CD8-positive, alpha-beta T cell (primary cell): ENCODE measurements at regions of chr20 and their contacts with region 1.

Region 1: GRCh38 chr20:46363800-46364634 is 42.4 kb downstream of the ELMO2 start:
- DNase-seq: peak; percentile 70 to 94 (median 86)
- ATAC-seq: peak; percentile 67
- H3K4me3 ChIP-seq: peak overlapping the region; percentile 89 to 92
- H3K4me3 Mint-ChIP-seq: peak overlapping the region; percentile 90
- H3K27ac ChIP-seq: peak overlapping the region; percentile 97 to 98
- H3K27ac Mint-ChIP-seq: peak overlapping the region; percentile 97
- H3K4me1 ChIP-seq: peaks cover 70% of the 10 kb centered on the region
- H3K4me1 Mint-ChIP-seq: peaks cover 83% of the 10 kb centered on the region
- H3K27me3 ChIP-seq: no peaks in the 10 kb centered on the region
- H3K27me3 Mint-ChIP-seq: no peaks in the 10 kb centered on the region
- CTCF ChIP-seq: no peak

Region 2: DNA sequence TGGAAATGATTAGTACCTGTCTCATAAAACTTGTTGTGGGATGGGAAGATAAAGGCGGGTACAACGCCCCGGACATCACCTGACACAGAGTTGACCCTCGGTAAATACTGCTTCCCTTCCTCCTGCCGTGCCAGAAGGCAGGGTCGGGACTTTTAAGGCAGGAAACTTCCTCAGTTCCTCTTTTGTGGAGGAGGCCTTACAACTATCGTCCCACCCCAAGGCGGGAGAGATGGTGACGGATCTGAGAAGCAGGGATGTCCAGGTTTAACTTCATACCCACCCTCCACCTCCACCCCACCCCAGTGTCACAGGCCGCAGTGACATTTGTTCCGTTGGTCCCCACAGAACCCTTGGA is 571.7 kb before region 1 on chr20:
- CTCF ChIA-PET with region 1: no interaction called
- POLR2A ChIA-PET with region 1: no interaction called
- intact Hi-C with region 1: loop called in 1 of 2 experiments (anchors 5 kb)
- DNase-seq: peak in 3 of 9 experiments; percentile 8 to 20 (median 12)
- ATAC-seq: peak; percentile 10
- H3K4me3 ChIP-seq: peak overlapping the region; percentile 82 to 100
- H3K4me3 Mint-ChIP-seq: peak overlapping the region; percentile 93
- H3K27ac ChIP-seq: peak overlapping the region; percentile 87 to 96
- H3K27ac Mint-ChIP-seq: peak overlapping the region; percentile 93
- H3K4me1 ChIP-seq: peaks cover 16% of the 10 kb centered on the region
- H3K4me1 Mint-ChIP-seq: peaks cover 19% of the 10 kb centered on the region
- H3K27me3 ChIP-seq: no peaks in the 10 kb centered on the region
- H3K27me3 Mint-ChIP-seq: no peaks in the 10 kb centered on the region
- CTCF ChIP-seq: no peak

Region 3: GRCh38 chr20:46374383-46374782 is 10.4 kb after region 1 on chr20:
- CTCF ChIA-PET with region 1: no interaction called
- POLR2A ChIA-PET with region 1: interaction called, 13 read pairs
- intact Hi-C with region 1: no loop called
- DNase-seq: no peak
- ATAC-seq: no peak
- H3K4me3 ChIP-seq: no peak overlapping the region
- H3K4me3 Mint-ChIP-seq: no peak overlapping the region
- H3K27ac ChIP-seq: no peak overlapping the region
- H3K27ac Mint-ChIP-seq: no peak overlapping the region
- H3K4me1 ChIP-seq: no peaks in the 10 kb centered on the region
- H3K4me1 Mint-ChIP-seq: peaks cover 2% of the 10 kb centered on the region
- H3K27me3 ChIP-seq: no peaks in the 10 kb centered on the region
- H3K27me3 Mint-ChIP-seq: no peaks in the 10 kb centered on the region
- CTCF ChIP-seq: no peak

Region 4: GRCh38 chr20:46400828-46401477 is 36.9 kb after region 1 on chr20:
- CTCF ChIA-PET with region 1: interaction called, 4 read pairs
- POLR2A ChIA-PET with region 1: interaction called, 30 read pairs
- intact Hi-C with region 1: loop called (anchors 1 kb)
- DNase-seq: peak in 7 of 9 experiments; percentile 7 to 89 (median 51)
- ATAC-seq: peak; percentile 84
- H3K4me3 ChIP-seq: peak overlapping the region; percentile 2 to 27
- H3K4me3 Mint-ChIP-seq: peak overlapping the region; percentile 70
- H3K27ac ChIP-seq: peak overlapping the region; percentile 53 to 87
- H3K27ac Mint-ChIP-seq: peak overlapping the region; percentile 92
- H3K4me1 ChIP-seq: peaks cover 67% of the 10 kb centered on the region
- H3K4me1 Mint-ChIP-seq: peaks cover 75% of the 10 kb centered on the region
- H3K27me3 ChIP-seq: no peaks in the 10 kb centered on the region
- H3K27me3 Mint-ChIP-seq: no peaks in the 10 kb centered on the region
- CTCF ChIP-seq: no peak

Region 5: DNA sequence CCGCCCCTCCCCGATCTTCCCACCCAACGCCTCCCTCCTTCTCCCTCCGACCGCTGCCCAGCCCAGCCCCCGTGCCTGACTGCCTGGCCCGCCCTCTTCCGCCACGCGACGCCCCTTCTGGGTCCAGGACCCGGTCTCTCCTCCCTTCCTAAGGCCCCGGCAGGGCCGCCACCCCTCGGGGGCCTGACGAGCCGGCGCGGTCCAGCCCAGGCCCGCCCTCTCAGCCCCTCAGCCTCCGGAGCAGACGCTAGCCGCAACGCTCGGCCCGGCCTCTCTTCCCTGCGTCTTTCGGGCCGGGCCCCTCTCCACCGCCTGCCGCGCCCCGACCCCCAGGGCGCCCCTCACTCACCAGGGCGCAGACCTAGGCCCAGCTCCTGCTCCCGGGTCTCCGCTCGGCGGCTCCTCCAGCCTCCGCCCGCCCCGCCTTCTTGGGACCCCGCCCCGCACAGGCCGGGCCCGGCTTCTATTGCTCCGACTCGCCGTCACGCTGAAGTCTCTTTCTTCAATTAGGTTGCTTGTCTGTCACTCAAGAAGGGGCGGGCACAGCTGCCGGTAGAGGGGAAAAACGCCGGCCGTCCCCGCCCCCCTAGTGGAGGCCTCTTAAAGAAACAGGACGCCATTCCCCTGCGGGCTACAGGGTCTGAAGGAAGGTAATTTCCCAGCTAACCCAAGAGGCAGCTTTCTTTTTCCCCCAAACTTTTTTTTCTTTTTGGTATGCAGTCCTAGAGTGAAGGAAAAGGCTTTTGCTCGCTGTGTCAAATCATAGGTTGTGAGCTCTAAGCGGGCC is 42.4 kb after region 1 on chr20 and contains the start of gene ELMO2:
- CTCF ChIA-PET with region 1: interaction called, 6 read pairs
- POLR2A ChIA-PET with region 1: interaction called, 30 read pairs
- intact Hi-C with region 1: loop called (anchors 1 kb)
- DNase-seq: peak; percentile 89 to 98 (median 96)
- ATAC-seq: peak; percentile 90
- H3K4me3 ChIP-seq: peak within 1 kb of the TSS; percentile 89 to 91
- H3K4me3 Mint-ChIP-seq: peak within 1 kb of the TSS; percentile 99
- H3K27ac ChIP-seq: peak within 1 kb of the TSS; percentile 72 to 82
- H3K27ac Mint-ChIP-seq: peak within 1 kb of the TSS; percentile 98
- H3K4me1 ChIP-seq: peaks cover 53% of the 10 kb centered on the region
- H3K4me1 Mint-ChIP-seq: peaks cover 70% of the 10 kb centered on the region
- H3K27me3 ChIP-seq: no peaks in the 10 kb centered on the region
- H3K27me3 Mint-ChIP-seq: no peaks in the 10 kb centered on the region
- CTCF ChIP-seq: no peak
- total RNA-seq, gene ELMO2: 59.2 to 62.8 TPM

Region 6: DNA sequence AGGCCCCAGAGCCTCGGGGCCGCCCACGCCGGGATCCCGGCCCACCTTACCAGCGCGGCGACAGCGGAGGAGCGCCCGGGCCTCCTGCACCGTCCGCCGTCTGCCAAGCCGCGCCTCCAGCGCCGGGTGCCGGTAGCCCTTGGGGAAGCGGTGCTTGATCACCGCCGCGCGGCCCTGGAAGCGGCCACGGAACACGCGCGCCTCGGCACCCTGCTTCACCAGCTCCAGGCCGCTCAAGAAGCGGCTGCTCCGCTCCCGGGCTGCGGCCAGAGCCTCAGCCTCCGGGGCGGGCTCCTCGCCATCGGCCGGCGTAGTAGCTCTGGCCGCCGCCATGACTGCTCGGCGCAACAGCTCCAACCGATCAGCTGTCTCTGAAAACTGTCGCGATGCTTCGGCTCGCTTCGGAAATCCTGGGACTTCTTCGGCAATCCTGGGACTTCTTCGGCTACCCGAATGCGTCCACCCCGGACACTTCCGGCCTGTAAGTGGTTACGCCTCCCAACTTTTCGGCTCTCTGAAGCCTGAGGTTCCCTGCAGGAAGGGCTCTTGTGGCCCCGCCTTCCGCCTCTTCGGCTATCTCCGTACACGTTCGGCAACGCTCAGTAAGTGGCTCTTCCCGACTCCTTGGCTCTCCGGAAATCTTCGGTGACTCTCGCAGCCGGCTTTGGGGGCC is 325.2 kb after region 1 on chr20 and contains the start of gene TP53RK:
- CTCF ChIA-PET with region 1: no interaction called
- POLR2A ChIA-PET with region 1: interaction called, 3 read pairs
- intact Hi-C with region 1: loop called in 1 of 2 experiments (anchors 5 kb)
- DNase-seq: peak; percentile 89 to 99 (median 96)
- ATAC-seq: peak; percentile 96
- H3K4me3 ChIP-seq: peak within 1 kb of the TSS; percentile 92 to 96
- H3K4me3 Mint-ChIP-seq: peak within 1 kb of the TSS; percentile 100
- H3K27ac ChIP-seq: peak within 1 kb of the TSS; percentile 74 to 83
- H3K27ac Mint-ChIP-seq: peak within 1 kb of the TSS; percentile 99
- H3K4me1 ChIP-seq: peaks cover 42% of the 10 kb centered on the region
- H3K4me1 Mint-ChIP-seq: peaks cover 57% of the 10 kb centered on the region
- H3K27me3 ChIP-seq: no peaks in the 10 kb centered on the region
- H3K27me3 Mint-ChIP-seq: no peaks in the 10 kb centered on the region
- CTCF ChIP-seq: no peak
- total RNA-seq, gene TP53RK: 5.4 TPM